Transverse colon (tissue), 4 donors: ENCODE measurements at regions of chr1 and their contacts with region 1.

Region 1: DNA sequence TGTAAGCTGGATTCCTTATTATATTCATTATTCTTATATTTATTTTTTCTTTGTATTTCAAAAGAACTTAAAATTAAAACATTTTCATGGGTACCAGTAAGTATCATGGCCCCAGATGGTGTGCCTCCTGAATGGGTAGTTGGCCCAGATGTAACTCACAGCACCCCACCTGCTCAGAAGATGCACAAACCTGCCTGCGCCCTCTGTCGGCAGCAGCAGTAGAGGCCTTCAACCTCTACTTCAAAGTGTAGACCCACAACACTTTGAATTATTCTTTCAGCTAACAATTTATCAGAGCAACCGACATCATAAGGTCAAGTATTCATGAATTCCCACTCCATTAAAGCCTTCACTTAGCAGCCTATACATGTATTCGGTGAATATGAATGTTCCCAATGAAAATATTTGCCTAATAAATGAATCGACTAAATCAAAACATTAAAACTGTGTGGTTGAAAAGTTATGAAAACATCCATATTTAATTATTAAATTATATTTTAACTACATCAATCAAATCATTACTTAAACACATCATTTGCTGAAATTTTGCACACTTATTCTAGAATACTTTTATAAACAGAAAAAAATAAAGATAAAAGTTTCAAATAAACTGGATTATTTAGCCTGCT is 25.4 kb downstream of the PIGM start:
- DNase-seq: peak; percentile 82
- H3K4me3 ChIP-seq: no peak overlapping the region
- H3K27ac ChIP-seq: no peak overlapping the region
- H3K4me1 ChIP-seq: no peaks in the 10 kb centered on the region
- H3K27me3 ChIP-seq: no peaks in the 10 kb centered on the region
- CTCF ChIP-seq: peak; percentile 75 to 86 (median 85)
- EP300 ChIP-seq: no peak
- POLR2A ChIP-seq: no peak

Region 2: DNA sequence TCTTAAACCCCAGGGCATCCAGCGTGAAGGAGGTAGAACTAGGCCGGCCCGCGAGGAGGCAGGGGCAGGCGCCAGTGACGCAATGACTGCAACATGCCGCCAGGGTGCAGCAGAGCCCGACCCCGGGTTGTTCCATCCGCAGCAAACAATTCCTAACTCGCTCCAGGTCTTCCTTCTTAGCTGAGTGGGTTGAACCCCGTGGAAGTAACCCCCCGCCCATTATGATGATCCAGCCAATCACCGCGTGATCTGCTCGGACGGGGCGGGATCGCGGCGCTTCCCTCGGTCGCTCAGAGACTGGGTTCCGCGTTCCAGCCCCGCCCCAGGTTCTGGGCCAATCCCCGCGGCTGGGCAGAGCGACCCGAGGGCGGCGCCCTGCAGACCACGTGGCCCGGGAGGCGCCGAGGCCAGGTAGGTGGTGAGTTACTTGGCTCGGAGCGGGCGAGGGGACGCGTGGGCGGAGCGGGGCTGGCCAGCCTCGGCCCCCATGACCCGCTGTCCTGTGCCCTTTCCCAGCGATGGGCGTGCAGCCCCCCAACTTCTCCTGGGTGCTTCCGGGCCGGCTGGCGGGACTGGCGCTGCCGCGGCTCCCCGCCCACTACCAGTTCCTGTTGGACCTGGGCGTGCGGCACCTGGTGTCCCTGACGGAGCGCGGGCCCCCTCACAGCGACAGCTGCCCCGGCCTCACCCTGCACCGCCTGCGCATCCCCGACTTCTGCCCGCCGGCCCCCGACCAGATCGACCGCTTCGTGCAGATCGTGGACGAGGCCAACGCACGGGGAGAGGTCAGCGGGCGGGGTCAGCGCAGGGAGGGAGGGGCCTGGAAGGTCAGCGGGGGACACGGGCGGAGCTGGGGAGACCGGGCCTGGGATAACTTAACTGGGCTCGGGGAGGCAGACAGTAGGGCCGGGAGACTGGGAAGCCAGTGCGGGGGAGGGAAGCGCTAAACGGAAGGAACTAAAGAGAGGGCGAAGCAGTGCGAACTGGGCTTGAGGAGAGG is 225.5 kb before region 1 on chr1 and contains the start of gene DUSP23:
- in situ Hi-C with region 1: loop called in 3 of 4 experiments (anchors 25 kb)
- intact Hi-C with region 1: no loop called
- DNase-seq: peak; percentile 98
- H3K4me3 ChIP-seq: peak within 1 kb of the TSS; percentile 62 to 90 (median 70)
- H3K27ac ChIP-seq: peak within 1 kb of the TSS; percentile 81 to 90 (median 87)
- H3K4me1 ChIP-seq: peaks cover 0 to 15% (median 2%) of the 10 kb centered on the region in 4 donors
- H3K27me3 ChIP-seq: no peaks in the 10 kb centered on the region
- CTCF ChIP-seq: peak; percentile 86 to 99 (median 95)
- EP300 ChIP-seq: no peak
- POLR2A ChIP-seq: peak; percentile 94
- total RNA-seq, gene DUSP23: 9.7 to 96.4 (median 72.3) TPM

Region 3: GRCh38 chr1:159798893-159799292 is 207.5 kb before region 1 on chr1:
- in situ Hi-C with region 1: loop called (anchors 10 to 25 kb)
- intact Hi-C with region 1: no loop called
- DNase-seq: peak; percentile 72
- H3K4me3 ChIP-seq: no peak overlapping the region
- H3K27ac ChIP-seq: no peak overlapping the region
- H3K4me1 ChIP-seq: peaks cover 0 to 2% (median 0%) of the 10 kb centered on the region in 4 donors
- H3K27me3 ChIP-seq: peaks cover 5% of the 10 kb centered on the region
- CTCF ChIP-seq: peak; percentile 65 to 87 (median 74)
- EP300 ChIP-seq: no peak
- POLR2A ChIP-seq: no peak

Region 4: DNA sequence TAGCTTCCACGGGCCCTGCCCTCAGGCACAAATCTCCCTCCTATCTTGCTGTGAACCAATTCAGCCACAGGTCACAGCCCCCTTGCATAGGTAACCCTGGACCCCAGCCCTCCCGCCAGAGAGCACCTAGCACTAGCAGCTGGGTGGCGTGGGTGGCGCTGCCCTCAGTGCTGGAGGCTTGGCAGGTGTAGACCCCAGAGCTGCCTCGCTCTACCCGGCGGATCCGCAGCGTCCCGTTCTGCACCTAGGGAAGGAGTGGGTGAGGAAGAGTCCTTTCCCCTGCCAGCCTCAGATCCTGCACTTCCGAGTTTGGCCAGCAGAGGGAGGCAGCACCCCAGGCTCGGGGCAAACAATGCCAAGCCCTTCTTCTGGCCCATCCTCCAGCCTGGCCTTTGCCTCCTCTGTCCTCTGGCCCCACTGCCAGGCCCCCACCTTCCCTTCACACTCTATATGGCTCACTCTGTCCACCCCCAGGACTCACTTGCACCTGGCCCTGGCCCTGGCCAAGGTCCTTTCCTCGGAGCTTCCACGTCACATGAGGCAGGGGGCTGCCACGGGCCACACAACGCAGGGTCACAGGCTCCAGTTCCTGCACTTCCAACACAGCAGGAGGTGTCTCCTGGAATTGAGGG is 70.0 kb before region 1 on chr1:
- in situ Hi-C with region 1: loop called (anchors 5 to 10 kb)
- intact Hi-C with region 1: loop called (anchors 1 kb)
- DNase-seq: peak; percentile 91
- H3K4me3 ChIP-seq: no peak overlapping the region
- H3K27ac ChIP-seq: peak overlapping the region; percentile 37 to 62 (median 52)
- H3K4me1 ChIP-seq: peaks cover 21 to 43% (median 37%) of the 10 kb centered on the region in 4 donors
- H3K27me3 ChIP-seq: no peaks in the 10 kb centered on the region
- CTCF ChIP-seq: peak; percentile 98 to 99 (median 99)
- EP300 ChIP-seq: no peak
- POLR2A ChIP-seq: no peak

Region 5: GRCh38 chr1:160646711-160647328 is 640.4 kb after region 1 on chr1 and contains the start of gene SLAMF1:
- in situ Hi-C with region 1: no loop called
- intact Hi-C with region 1: no loop called
- DNase-seq: peak; percentile 30
- H3K4me3 ChIP-seq: peak within 1 kb of the TSS in 2 of 4 donors; percentile 5 to 34
- H3K27ac ChIP-seq: peak within 1 kb of the TSS; percentile 32 to 71 (median 51)
- H3K4me1 ChIP-seq: no peaks in the 10 kb centered on the region
- H3K27me3 ChIP-seq: no peaks in the 10 kb centered on the region
- CTCF ChIP-seq: no peak
- EP300 ChIP-seq: no peak
- POLR2A ChIP-seq: no peak
- total RNA-seq, gene SLAMF1: 1.1 to 3.3 (median 3.2) TPM in 3 of 4 donors, not detected in the other